ENCODE measurements at regions of chr2 and their contacts with region 1.

Region 1: GRCh38 chr2:168136392-168136977 is 110.9 kb downstream of the STK39 start:
- DNase-seq: peak; percentile 16
- CTCF ChIP-seq: peak; percentile 28

Region 2: GRCh38 chr2:167729911-167730310 is 406.6 kb before region 1 on chr2:
- CTCF ChIA-PET with region 1: no interaction called
- POLR2A ChIA-PET with region 1: no interaction called
- DNase-seq: no peak
- CTCF ChIP-seq: no peak

Region 3: GRCh38 chr2:168146892-168147810 is 10.7 kb after region 1 on chr2:
- CTCF ChIA-PET with region 1: interaction called, 10 read pairs
- POLR2A ChIA-PET with region 1: no interaction called
- DNase-seq: no peak
- CTCF ChIP-seq: no peak